Left ventricle myocardium superior (tissue), 1 donor: ENCODE measurements at regions of chr11 and their contacts with region 1.

Region 1: GRCh38 chr11:49221112-49221511 is 12.7 kb upstream of the FOLH1 start:
- DNase-seq: no peak
- ATAC-seq: no peak

Region 2: GRCh38 chr11:49533204-49533603 is 312.1 kb after region 1 on chr11:
- intact Hi-C with region 1: loop called (anchors 10 kb)
- DNase-seq: no peak
- ATAC-seq: no peak